ENCODE measurements at regions of chr11 and their contacts with region 1.

Region 1: GRCh38 chr11:128290106-128290840 is 297.1 kb downstream of the ETS1 start:
- DNase-seq: peak; percentile 81

Region 2: DNA sequence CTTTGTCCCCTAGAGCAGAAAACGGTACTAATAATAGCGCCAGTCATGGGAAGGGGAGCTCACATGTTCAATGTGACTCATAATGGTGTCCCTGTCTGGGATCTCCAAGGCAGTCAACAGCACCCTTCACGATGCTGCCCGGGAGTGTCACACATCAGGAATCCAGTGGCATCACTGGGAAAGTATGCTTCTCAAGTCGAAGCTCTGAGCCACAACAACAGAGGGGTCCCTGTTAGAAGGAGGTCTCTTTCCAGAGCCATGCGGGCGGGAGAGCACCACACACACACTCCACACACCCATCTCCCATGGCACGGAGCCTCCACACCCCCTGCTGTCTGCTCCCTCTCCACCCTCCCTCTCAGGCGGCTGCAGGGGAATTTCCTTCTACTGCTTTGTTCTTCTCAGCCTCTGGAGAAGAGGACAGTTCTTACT is 177.4 kb after region 1 on chr11:
- intact Hi-C with region 1: loop called in 1 of 2 experiments (anchors 10 kb)
- DNase-seq: no peak

Region 3: GRCh38 chr11:128630367-128631230 is 340.3 kb after region 1 on chr11:
- intact Hi-C with region 1: loop called (anchors 2 to 5 kb)
- DNase-seq: peak; percentile 97

Region 4: GRCh38 chr11:128824191-128825049 is 534.1 kb after region 1 on chr11:
- intact Hi-C with region 1: loop called in 1 of 2 experiments (anchors 10 kb)
- DNase-seq: no peak